ENCODE measurements at regions of chr19 and their contacts with region 1.

Region 1: DNA sequence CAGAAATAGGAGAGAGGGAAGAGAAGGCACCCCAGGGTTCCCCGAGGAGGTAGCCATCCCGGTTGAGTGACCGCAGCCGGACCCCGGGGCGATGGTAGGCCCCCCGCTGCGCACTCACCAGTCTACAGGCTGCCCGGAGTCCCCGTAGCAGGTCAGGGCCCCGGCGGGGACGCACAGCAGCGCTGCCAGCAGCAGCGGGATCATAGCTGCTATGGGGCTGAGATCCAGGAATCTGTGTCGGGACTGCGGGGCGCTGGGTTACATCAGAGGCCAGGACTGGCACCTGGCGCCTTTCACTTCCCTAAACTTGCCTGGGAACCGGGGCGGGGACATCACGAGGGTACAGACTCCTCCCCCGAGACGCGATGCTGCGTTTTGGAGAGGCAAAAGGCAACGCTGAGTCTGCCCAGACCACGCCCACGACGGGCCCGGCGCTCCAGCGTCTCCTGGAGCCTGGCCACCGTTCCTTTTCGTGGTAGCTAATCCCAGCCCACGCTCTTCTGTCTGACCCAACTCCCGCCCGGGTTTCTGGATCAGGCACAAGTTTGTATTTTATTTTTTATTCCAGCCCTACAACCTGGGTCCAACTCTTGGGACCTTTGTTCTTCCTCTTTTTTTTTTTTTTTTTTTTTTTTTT is at the start of gene DNASE2:
- H3K4me3 ChIP-seq: peak within 1 kb of the TSS; percentile 84
- H3K27ac ChIP-seq: peak within 1 kb of the TSS; percentile 66; the same call in 1 of the 2 replicates
- H3K4me1 ChIP-seq: no peaks in the 10 kb centered on the region
- CTCF ChIP-seq: no peak

Region 2: DNA sequence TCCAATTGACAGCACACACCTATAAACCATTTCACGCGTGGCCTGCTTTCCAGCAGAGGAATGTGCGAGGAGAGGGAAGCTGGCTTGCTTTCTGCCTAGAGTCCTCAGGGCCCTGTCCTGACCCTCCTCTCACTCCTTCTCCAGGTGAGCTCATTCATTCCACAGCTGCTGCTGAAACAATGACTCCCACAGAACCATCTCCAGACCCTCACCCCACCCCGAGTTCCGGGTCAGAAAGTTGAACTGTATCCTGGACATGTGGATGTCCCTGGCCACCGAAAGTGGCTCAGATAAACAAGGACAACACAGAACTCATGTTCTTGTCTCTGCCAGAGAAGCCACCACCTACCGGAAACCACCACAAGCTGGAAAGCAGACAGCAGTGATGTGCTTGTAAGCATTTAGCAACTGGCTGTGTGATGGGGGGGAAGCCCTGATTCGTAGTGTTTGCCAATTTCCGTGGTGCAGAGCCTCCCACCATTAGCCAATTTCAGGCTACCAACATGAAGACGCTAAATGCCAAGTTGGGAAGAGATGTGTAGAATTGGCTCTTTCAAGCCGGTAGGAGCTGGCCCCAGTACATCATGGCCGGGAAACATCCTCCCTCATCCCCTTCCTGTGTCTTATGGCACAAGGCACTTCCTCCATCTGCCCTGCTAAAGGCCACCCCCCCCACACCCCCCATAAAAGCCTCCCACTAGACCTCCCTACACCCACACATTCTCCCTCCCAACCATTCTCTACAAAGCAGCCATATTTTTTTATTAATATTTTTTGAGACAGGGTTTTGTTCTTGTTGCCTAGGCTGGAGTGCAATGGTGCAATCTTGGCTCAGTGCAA is 32.8 kb after region 1 on chr19:
- CTCF ChIA-PET with region 1: no interaction called
- POLR2A ChIA-PET with region 1: interaction called, 10 read pairs
- H3K4me3 ChIP-seq: no peak overlapping the region
- H3K27ac ChIP-seq: peak overlapping the region; percentile 48; the same call in 1 of the 2 replicates
- H3K4me1 ChIP-seq: peaks cover 13% of the 10 kb centered on the region
- CTCF ChIP-seq: no peak